ENCODE measurements at regions of chr11 and their contacts with region 1.

Region 1: DNA sequence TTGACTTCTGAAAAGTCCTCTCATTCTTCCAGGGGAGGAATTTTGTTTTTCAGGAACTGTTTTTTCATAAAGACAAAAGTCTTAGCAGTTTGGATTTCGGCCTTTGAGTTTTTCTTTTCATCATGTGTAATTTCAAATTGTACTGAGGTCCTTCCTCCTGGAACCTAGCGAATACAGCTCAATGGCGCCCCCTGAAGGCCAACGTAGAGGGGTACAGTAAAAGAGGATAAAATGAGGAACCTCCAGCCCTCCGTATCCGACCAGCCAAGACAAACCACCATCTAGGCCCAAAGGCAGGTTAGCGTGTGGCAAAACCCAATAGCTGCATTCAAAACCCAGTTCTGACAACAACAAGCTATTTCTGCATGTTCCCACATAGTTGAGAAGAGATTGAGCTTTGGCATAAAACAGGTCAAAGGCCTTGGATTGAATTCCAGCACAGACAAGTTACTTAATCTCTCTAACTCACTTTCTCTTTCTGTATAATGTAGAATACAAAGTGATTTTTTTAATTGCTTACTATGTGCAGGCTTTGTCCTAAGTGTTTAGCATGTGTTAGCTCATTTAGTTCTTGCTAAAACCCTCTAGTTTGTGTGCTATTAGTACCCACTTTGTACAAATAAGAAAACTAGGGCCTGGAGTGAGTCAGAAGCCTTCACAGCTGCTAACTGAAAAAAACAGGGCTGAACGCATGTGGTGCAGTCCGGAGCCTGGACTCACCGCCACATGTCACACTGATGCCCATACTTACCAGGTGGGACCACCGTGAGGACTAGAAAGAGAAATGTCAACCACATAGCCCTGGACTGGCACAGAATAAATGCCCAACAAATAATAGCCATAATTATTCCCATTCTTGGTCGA is 43.2 kb upstream of the ETS1 start:
- DNase-seq: peak; percentile 90 to 97
- ATAC-seq: peak; percentile 66 to 88 (median 68)
- H3K4me3 ChIP-seq: no peak overlapping the region
- H3K4me3 Mint-ChIP-seq: peak overlapping the region; percentile 59
- H3K27ac ChIP-seq: peak overlapping the region; percentile 59
- H3K27ac Mint-ChIP-seq: peak overlapping the region; percentile 93 to 97
- H3K4me1 ChIP-seq: peaks cover 55% of the 10 kb centered on the region
- H3K4me1 Mint-ChIP-seq: peaks cover 55 to 67% of the 10 kb centered on the region in 2 donors
- H3K27me3 ChIP-seq: no peaks in the 10 kb centered on the region
- H3K27me3 Mint-ChIP-seq: no peaks in the 10 kb centered on the region
- CTCF ChIP-seq: peak; percentile 86

Region 2: GRCh38 chr11:128172046-128172878 is 458.3 kb before region 1 on chr11:
- intact Hi-C with region 1: loop called (anchors 1 kb)
- DNase-seq: peak; percentile 81 to 93
- ATAC-seq: peak; percentile 85 to 94 (median 88)
- H3K4me3 ChIP-seq: no peak overlapping the region
- H3K4me3 Mint-ChIP-seq: no peak overlapping the region
- H3K27ac ChIP-seq: no peak overlapping the region
- H3K27ac Mint-ChIP-seq: no peak overlapping the region
- H3K4me1 ChIP-seq: no peaks in the 10 kb centered on the region
- H3K4me1 Mint-ChIP-seq: peaks cover 8 to 11% of the 10 kb centered on the region in 2 donors
- H3K27me3 ChIP-seq: no peaks in the 10 kb centered on the region
- H3K27me3 Mint-ChIP-seq: peaks cover 0 to 3% of the 10 kb centered on the region in 2 donors
- CTCF ChIP-seq: peak; percentile 97

Region 3: DNA sequence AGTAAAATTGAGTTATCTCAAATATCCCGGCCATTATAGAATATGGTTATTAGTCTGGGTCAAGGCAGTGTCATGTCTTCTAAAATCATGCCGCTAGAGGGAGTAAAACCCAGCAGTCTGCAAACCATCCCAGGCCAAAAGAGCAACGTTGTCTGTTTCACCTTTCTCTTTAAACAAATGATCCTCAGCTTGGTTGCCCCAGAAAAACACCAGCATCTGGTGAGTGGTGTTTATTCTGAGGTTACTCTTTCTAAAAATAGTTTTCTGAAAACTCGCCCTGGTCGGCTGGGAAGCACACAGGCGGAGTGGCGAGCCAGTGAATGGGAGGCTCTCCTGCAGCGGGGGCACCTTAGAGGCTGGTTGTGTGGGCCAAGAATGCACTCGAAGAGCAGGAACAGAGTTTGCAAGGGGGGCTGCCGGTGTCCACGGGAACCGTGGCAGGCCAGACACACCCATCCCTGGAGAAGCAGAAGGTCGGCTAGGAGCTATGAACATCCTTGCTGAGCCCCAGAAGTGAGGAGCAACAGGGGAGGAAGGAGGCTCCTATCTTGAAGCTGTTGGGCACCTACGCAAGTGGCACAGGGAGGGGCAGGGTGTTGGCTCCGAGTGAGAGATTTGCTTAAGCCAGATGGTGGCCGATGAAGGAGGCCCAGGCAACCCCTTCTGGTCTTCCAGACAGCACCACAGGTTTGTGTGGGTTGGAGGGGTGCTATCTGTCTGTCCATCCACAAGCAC is 340.3 kb before region 1 on chr11:
- intact Hi-C with region 1: loop called (anchors 1 kb)
- DNase-seq: peak; percentile 62 to 95
- ATAC-seq: peak; percentile 79 to 90 (median 85)
- H3K4me3 ChIP-seq: peak overlapping the region; percentile 31
- H3K4me3 Mint-ChIP-seq: peak overlapping the region; percentile 94
- H3K27ac ChIP-seq: peak overlapping the region; percentile 97
- H3K27ac Mint-ChIP-seq: peak overlapping the region; percentile 98 to 99
- H3K4me1 ChIP-seq: peaks cover 37% of the 10 kb centered on the region
- H3K4me1 Mint-ChIP-seq: peaks cover 84 to 90% of the 10 kb centered on the region in 2 donors
- H3K27me3 ChIP-seq: no peaks in the 10 kb centered on the region
- H3K27me3 Mint-ChIP-seq: no peaks in the 10 kb centered on the region
- CTCF ChIP-seq: peak; percentile 87

Region 4: GRCh38 chr11:128551611-128552335 is 78.8 kb before region 1 on chr11:
- intact Hi-C with region 1: loop called (anchors 1 kb)
- DNase-seq: peak; percentile 27 to 72
- ATAC-seq: peak; percentile 89 to 90 (median 89)
- H3K4me3 ChIP-seq: no peak overlapping the region
- H3K4me3 Mint-ChIP-seq: peak overlapping the region; percentile 55
- H3K27ac ChIP-seq: peak overlapping the region; percentile 87
- H3K27ac Mint-ChIP-seq: peak overlapping the region; percentile 97
- H3K4me1 ChIP-seq: peaks cover 53% of the 10 kb centered on the region
- H3K4me1 Mint-ChIP-seq: peaks cover 57 to 61% of the 10 kb centered on the region in 2 donors
- H3K27me3 ChIP-seq: no peaks in the 10 kb centered on the region
- H3K27me3 Mint-ChIP-seq: no peaks in the 10 kb centered on the region
- CTCF ChIP-seq: no peak

Region 5: GRCh38 chr11:128568166-128568778 is 62.3 kb before region 1 on chr11:
- intact Hi-C with region 1: no loop called
- DNase-seq: peak in 1 of 2 donors; percentile 26
- ATAC-seq: peak in 1 of 3 donors; percentile 48
- H3K4me3 ChIP-seq: no peak overlapping the region
- H3K4me3 Mint-ChIP-seq: no peak overlapping the region
- H3K27ac ChIP-seq: no peak overlapping the region
- H3K27ac Mint-ChIP-seq: no peak overlapping the region
- H3K4me1 ChIP-seq: no peaks in the 10 kb centered on the region
- H3K4me1 Mint-ChIP-seq: no peaks in the 10 kb centered on the region
- H3K27me3 ChIP-seq: no peaks in the 10 kb centered on the region
- H3K27me3 Mint-ChIP-seq: peaks cover 0 to 3% of the 10 kb centered on the region in 2 donors
- CTCF ChIP-seq: no peak

Region 6: DNA sequence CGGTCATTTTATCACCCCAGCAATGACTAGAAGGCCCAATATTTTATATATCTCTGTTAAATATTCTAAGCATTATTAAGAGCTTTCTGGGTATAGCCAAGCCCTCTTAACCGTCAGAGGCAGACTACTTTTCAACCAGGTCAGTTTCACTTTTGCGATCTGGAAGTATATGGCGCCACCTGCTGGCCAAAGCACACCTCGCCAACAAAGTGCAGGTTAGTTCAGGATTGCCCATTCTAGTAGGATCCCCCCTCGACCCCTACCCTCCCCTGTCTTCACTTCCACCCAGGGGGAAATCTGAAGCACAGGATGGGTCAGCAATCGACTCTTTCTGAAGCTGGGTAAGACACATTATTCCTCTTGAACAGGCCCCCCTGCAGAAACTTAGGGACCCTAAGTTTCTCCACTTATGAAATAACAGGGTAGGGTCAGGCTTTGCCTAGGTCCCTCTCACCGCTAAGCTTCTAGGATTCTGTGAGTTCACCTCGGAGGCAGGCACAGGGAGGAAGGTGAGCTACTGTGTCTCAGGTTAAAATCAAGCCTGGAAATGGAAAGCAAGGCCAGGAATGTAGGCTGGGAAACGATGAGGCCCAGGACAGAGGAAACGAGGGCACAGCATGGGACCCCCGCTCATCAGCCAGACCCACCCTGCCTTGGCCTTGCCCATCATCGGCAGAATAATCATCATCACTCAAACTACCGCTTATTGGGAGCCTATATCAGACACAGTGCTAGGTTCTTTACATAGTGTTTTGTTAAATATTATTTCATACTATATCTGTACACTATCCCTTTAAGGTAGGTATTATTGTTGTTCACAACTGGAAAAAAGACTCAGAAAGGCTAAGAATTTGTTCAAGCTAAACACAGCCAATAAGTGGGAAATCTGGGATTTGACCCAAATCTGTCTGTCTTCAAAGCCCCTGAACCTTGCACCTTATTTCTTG is 200.8 kb after region 1 on chr11:
- intact Hi-C with region 1: loop called (anchors 2 kb)
- DNase-seq: peak; percentile 82 to 94
- ATAC-seq: peak; percentile 86 to 90 (median 88)
- H3K4me3 ChIP-seq: peak overlapping the region; percentile 13
- H3K4me3 Mint-ChIP-seq: peak overlapping the region; percentile 84
- H3K27ac ChIP-seq: peak overlapping the region; percentile 70
- H3K27ac Mint-ChIP-seq: peak overlapping the region; percentile 87 to 88
- H3K4me1 ChIP-seq: peaks cover 16% of the 10 kb centered on the region
- H3K4me1 Mint-ChIP-seq: peaks cover 25 to 36% of the 10 kb centered on the region in 2 donors
- H3K27me3 ChIP-seq: no peaks in the 10 kb centered on the region
- H3K27me3 Mint-ChIP-seq: no peaks in the 10 kb centered on the region
- CTCF ChIP-seq: peak; percentile 95